HEK293 (cell line): ENCODE measurements at regions of chr15 and their contacts with region 1.

Region 1: GRCh38 chr15:50876989-50877360 is 31.5 kb upstream of the AP4E1 start:
- H3K4me3 ChIP-seq: peak overlapping the region; percentile 30
- H3K27ac ChIP-seq: no peak overlapping the region
- H3K4me1 ChIP-seq: no peaks in the 10 kb centered on the region
- CTCF ChIP-seq: 0 out of 2 replicates have a peak, but pooled peaks have one; percentile 38

Region 2: GRCh38 chr15:50675536-50676144 is 201.3 kb before region 1 on chr15:
- CTCF ChIA-PET with region 1: interaction called, 19 read pairs
- POLR2A ChIA-PET with region 1: no interaction called
- H3K4me3 ChIP-seq: no peak overlapping the region
- H3K27ac ChIP-seq: no peak overlapping the region
- H3K4me1 ChIP-seq: no peaks in the 10 kb centered on the region
- CTCF ChIP-seq: no peak